ENCODE measurements at regions of chr1 and their contacts with region 1.

Region 1: GRCh38 chr1:109112652-109113285 is 1.1 kb upstream of the ELAPOR1 start:
- DNase-seq: peak; percentile 44
- H3K4me3 ChIP-seq: peak overlapping the region; percentile 3; the same call in 1 of the 2 replicates
- H3K27me3 ChIP-seq: peaks cover 24% of the 10 kb centered on the region
- CTCF ChIP-seq: peak; percentile 99

Region 2: GRCh38 chr1:108785264-108785663 is 327.5 kb before region 1 on chr1:
- CTCF ChIA-PET with region 1: no interaction called
- POLR2A ChIA-PET with region 1: no interaction called
- DNase-seq: no peak
- H3K4me3 ChIP-seq: no peak overlapping the region
- H3K27me3 ChIP-seq: no peaks in the 10 kb centered on the region
- CTCF ChIP-seq: no peak

Region 3: GRCh38 chr1:109099938-109100773 is 12.6 kb before region 1 on chr1:
- CTCF ChIA-PET with region 1: interaction called, 51 read pairs
- POLR2A ChIA-PET with region 1: no interaction called
- DNase-seq: peak; percentile 73
- H3K4me3 ChIP-seq: peak overlapping the region; percentile 97
- H3K27me3 ChIP-seq: no peaks in the 10 kb centered on the region
- CTCF ChIP-seq: peak; percentile 92

Region 4: DNA sequence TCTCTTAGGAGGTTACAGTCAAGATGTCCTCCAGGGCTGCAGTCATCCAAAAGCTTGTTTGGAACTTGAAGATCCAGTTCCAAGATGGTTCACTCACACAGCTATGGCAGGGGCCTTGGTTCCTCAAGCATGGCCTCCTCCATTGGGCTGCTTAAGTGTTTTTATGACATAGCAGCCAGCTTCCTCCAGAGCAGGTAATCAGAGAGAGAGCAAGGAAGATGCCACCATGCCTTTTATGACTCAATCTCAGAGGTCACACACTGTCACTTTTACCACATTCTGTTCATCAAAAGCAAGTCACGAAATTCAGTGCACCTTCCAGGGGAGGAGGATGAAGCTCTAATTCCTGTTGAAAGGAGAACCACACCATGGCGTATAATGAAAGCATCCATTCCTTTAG is 18.3 kb after region 1 on chr1:
- CTCF ChIA-PET with region 1: interaction called, 40 read pairs
- POLR2A ChIA-PET with region 1: no interaction called
- DNase-seq: no peak
- H3K4me3 ChIP-seq: no peak overlapping the region
- H3K27me3 ChIP-seq: no peaks in the 10 kb centered on the region; the same call in 1 of the 2 replicates
- CTCF ChIP-seq: no peak